Activated T-helper 2 cell treated with anti-CD3 and anti-CD28 coated beads, Interferon-gamma antibody, Interleukin-2, Interleukin-4, amounts not matched to agents 10 μg/mL and 5 μg/mL and 100 μg/mL, durations not matched to agents 14 hours and 24 hours and 36 hours (primary cell): ENCODE measurements at regions of chr2 and their contacts with region 1.

Region 1: DNA sequence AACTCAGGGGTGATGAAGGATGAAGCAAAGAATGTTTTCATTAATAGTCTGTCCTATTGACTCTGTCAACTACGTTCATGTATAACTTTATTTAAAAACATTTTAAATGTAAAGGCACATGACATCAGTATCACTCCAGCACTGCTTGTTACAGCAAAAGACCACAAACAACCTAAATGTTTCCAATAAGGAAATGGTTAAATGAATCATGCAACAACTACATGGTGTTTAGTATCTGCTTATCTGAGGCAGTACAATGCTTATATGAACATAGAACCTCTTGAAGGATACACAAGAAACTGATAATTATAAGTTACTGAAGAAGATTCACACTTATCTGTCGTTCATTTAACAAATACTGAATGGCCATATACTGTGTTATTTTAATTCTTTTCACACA is 8.4 kb downstream of the BARD1 start:
- DNase-seq: no peak
- H3K4me3 Mint-ChIP-seq: no peak overlapping the region
- H3K27ac Mint-ChIP-seq: peak overlapping the region; percentile 26
- H3K4me1 Mint-ChIP-seq: peaks cover 75% of the 10 kb centered on the region
- H3K27me3 Mint-ChIP-seq: no peaks in the 10 kb centered on the region

Region 2: DNA sequence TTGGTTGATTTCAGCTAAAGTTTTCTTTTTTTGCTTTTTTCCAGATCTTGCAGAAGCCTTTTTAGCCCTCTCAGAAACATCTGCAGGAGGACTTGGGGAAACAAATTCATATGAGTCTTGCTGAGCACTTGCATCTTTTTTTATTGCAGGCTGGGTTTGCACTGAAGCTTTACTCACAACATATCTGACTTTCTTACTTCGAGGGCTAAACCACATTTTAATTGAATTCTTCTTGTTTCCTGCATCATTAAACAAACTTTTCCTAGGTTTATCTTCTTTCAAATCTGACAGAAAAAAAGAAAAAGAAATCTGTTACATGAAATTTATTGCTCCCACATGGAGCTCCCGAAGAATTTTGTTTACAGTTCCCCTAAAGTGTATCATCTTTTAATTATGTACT is 19.8 kb before region 1 on chr2:
- intact Hi-C with region 1: loop called (anchors 2 kb)
- DNase-seq: no peak
- H3K4me3 Mint-ChIP-seq: no peak overlapping the region
- H3K27ac Mint-ChIP-seq: no peak overlapping the region
- H3K4me1 Mint-ChIP-seq: peaks cover 4% of the 10 kb centered on the region
- H3K27me3 Mint-ChIP-seq: no peaks in the 10 kb centered on the region